ENCODE measurements at regions of chr20 and their contacts with region 1.

Region 1: DNA sequence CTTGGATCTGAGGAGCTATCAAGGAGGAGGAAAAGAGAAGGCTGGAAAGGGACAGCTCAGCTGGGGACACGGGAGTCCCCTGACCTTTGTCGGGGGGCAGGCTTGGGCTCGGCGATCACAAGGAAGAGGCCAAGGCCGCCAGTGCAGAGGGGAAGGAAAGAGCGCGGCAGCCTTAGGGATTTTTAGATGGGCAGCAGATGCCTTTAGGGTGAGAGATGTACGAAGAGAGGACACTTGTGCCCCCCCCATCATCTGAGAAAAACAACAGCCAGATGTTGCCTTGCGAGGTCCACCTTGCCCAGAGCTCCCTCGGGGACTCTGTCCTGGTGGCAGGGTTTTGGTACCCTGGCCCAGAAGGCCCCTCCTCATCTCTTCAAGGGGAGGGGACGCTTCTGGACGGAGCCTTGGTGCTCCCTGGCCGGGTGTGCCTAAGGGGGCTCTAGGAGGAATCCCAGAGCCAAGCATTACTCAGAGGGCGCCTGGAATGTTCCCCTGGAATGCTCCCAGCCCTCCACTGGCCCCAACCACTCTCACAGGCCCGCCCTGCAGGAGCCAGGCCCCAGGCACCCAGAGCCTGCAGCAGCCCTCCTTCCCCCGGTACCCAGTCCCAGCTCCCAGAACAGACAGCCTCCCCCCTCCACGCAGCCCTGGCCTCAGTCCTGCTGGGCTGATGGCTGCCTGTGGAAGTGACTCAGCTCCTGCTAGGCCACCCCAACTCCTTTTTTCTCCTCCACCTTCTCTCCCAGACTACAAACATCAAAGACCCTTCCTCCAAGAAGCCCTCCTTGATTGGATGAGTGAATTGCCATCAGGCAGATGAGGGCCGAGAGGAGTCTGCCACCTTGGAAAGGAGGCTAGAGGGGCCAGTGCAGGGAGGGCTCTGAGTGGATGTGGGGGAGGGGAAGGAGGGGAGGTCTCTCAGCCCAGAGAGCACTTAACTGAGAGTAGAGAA is 1.8 kb downstream of the ADAM33 start:
- DNase-seq: no peak
- ATAC-seq: no peak
- H3K4me3 ChIP-seq: no peak overlapping the region
- H3K27ac ChIP-seq: no peak overlapping the region
- H3K4me1 ChIP-seq: peaks cover 2 to 13% of the 10 kb centered on the region in 2 experiments; a peak in 2 of 4 replicates
- H3K27me3 ChIP-seq: peaks cover 5% of the 10 kb centered on the region; the same call in 1 of the 2 replicates
- CTCF ChIP-seq: no peak
- POLR2A ChIP-seq: no peak
- RAD21 ChIP-seq: no peak

Region 2: DNA sequence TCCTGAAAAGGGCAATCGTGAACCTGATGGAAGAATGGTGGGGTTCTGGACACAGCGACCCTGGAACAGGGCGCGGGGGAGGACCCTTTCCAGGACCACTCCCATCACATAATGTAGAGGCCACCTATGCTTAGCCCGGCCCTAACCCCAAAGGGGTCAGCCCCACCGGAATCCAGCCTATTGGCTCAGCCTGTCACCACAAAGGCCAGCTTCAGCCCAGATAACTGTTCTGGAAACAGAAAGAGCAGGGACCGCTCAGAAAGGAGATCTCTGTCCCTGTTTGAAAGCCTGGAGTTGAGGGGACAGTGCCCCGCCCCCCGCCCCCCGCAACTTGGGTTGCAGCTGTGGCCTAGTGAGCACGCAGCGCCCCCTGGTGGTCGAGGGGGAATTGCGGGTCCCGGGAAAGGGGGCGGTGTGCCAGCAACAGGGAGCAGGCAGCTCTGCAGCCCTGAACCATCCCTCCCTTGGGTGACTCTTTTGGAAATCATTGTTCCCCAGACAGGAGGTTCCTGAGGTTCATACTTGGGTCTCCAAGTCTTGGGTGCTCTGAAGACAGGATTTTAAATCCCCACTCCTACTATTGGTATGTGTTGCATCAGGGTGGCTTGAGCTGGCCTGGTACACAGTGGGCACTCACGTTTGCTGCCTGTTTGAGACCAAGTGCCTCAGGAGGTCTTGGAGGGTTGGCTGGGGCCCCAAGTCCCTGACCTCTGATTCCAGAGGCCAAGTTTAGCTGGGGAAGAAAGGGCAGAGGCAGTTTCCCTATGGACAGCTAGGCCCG is 30.9 kb after region 1 on chr20:
- CTCF ChIA-PET with region 1: interaction called, 69 read pairs
- POLR2A ChIA-PET with region 1: interaction called, 3 read pairs
- RAD21 ChIA-PET with region 1: interaction called, 4 to 10 read pairs
- intact Hi-C with region 1: loop called (anchors 1 kb)
- DNase-seq: peak; percentile 16
- ATAC-seq: peak; percentile 84
- H3K4me3 ChIP-seq: no peak overlapping the region
- H3K27ac ChIP-seq: no peak overlapping the region
- H3K4me1 ChIP-seq: peaks cover 0 to 13% of the 10 kb centered on the region in 2 experiments; a peak in 3 of 4 replicates
- H3K27me3 ChIP-seq: no peaks in the 10 kb centered on the region
- CTCF ChIP-seq: peak; percentile 93 to 99 (median 96)
- POLR2A ChIP-seq: no peak
- RAD21 ChIP-seq: peak; percentile 84

Region 3: GRCh38 chr20:3744806-3745685 is 65.0 kb after region 1 on chr20:
- CTCF ChIA-PET with region 1: no interaction called
- POLR2A ChIA-PET with region 1: no interaction called
- RAD21 ChIA-PET with region 1: no interaction called
- intact Hi-C with region 1: loop called (anchors 2 kb)
- DNase-seq: peak; percentile 88
- ATAC-seq: peak; percentile 90
- H3K4me3 ChIP-seq: peak overlapping the region; percentile 15 to 52
- H3K27ac ChIP-seq: peak overlapping the region; percentile 21; the same call in 1 of the 2 replicates
- H3K4me1 ChIP-seq: peaks cover 9 to 20% of the 10 kb centered on the region in 2 experiments
- H3K27me3 ChIP-seq: no peaks in the 10 kb centered on the region
- CTCF ChIP-seq: 0 out of 6 replicates have a peak, but pooled peaks of 1 of the 3 experiments have one; percentile 3
- POLR2A ChIP-seq: no peak
- RAD21 ChIP-seq: no peak

Region 4: DNA sequence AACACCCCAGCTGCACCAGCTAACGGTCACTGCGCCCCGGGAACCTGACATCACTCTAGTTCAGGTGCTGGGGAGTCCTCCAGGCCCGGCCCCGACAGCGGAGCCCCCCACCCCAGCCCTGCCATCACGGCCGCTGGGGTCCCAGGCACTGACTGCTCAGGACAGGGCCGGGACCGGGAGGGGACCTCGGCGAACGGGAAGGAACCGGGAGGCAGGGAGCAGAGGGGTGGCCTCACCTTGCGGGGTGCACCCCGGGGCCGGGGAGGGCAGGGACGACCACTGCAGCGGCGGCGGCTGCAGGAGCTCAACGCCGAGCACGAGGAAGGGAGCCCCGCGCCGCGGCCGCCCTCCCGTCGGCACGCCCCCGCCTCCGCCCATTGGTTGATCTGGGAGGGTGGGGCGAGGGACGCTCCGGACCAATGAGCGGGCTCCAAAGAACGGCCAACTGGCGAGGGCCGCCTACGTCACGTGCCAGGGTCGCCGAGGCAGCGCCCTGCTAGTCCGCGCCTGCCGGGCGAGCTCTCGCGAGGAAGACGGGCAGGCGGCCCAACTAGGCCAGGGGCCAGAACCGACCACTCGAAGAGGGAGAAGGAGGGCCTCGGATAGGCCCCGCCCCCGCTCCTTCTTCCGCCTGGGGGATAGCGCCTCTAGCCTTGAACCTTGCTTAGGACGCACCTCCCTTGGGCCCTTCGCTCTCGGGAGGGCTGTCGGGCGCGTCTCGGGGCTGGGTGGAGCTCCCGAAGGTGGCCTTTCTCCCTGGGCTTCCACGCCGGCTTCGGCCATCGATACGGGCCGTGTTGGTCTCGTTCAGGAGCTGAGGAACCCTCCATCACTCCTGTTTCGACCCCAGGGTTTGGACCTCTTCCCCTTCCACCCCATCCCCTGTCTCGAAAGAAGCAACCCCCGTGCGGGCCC is 87.7 kb after region 1 on chr20 and contains the start of gene ADISSP:
- CTCF ChIA-PET with region 1: interaction called, 15 read pairs
- POLR2A ChIA-PET with region 1: no interaction called
- RAD21 ChIA-PET with region 1: no interaction called
- intact Hi-C with region 1: no loop called
- DNase-seq: peak; percentile 95
- ATAC-seq: peak; percentile 92
- H3K4me3 ChIP-seq: peak within 1 kb of the TSS; percentile 84 to 91
- H3K27ac ChIP-seq: peak within 1 kb of the TSS; percentile 83
- H3K4me1 ChIP-seq: peaks cover 12 to 36% of the 10 kb centered on the region in 2 experiments
- H3K27me3 ChIP-seq: no peaks in the 10 kb centered on the region
- CTCF ChIP-seq: peak in 2 of 3 experiments; percentile 8 to 26; a peak in 2 of 6 replicates
- POLR2A ChIP-seq: peak; percentile 31
- RAD21 ChIP-seq: no peak
- total RNA-seq, gene ADISSP: 99.4 TPM

Region 5: GRCh38 chr20:3781153-3781910 is 101.3 kb after region 1 on chr20 and contains the start of gene SPEF1:
- CTCF ChIA-PET with region 1: interaction called, 27 read pairs
- POLR2A ChIA-PET with region 1: no interaction called
- RAD21 ChIA-PET with region 1: no interaction called
- intact Hi-C with region 1: loop called (anchors 2 kb)
- DNase-seq: peak; percentile 92
- ATAC-seq: peak; percentile 90
- H3K4me3 ChIP-seq: peak within 1 kb of the TSS; percentile 55 to 64
- H3K27ac ChIP-seq: peak within 1 kb of the TSS; percentile 3; the same call in 1 of the 2 replicates
- H3K4me1 ChIP-seq: peaks cover 7 to 27% of the 10 kb centered on the region in 2 experiments; a peak in 3 of 4 replicates
- H3K27me3 ChIP-seq: no peaks in the 10 kb centered on the region
- CTCF ChIP-seq: peak; percentile 63 to 83 (median 69)
- POLR2A ChIP-seq: no peak
- RAD21 ChIP-seq: peak; percentile 66
- total RNA-seq, gene SPEF1: 0.93 TPM

Region 6: DNA sequence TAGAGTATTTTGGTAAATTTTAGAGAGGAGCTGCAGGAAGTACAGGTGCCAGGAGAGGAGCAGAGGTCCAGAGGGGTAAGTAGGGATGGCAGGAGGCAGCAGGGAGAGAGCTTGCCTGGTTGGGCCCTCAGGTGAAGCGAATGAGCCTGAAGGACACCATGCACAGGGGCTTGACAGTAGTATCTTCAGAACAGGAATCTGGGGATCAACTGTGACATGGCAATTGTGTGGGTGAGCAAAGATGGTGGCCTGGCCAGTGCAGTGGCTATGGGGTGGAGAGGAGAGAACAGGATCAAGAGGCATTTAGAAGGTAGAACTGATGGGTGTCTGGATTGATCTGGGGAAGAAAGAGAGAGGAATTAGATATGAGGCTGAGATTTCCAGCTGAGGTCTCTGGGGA is 404.1 kb after region 1 on chr20:
- CTCF ChIA-PET with region 1: interaction called, 12 read pairs
- POLR2A ChIA-PET with region 1: no interaction called
- RAD21 ChIA-PET with region 1: interaction called in 1 of 2 experiments, 5 read pairs
- intact Hi-C with region 1: loop called (anchors 2 kb)
- DNase-seq: no peak
- ATAC-seq: no peak
- H3K4me3 ChIP-seq: no peak overlapping the region
- H3K27ac ChIP-seq: no peak overlapping the region
- H3K4me1 ChIP-seq: peaks cover 5 to 27% of the 10 kb centered on the region in 2 experiments; a peak in 3 of 4 replicates
- H3K27me3 ChIP-seq: no peaks in the 10 kb centered on the region
- CTCF ChIP-seq: no peak
- POLR2A ChIP-seq: no peak
- RAD21 ChIP-seq: no peak

Measured in HCT116 (cell line).